Activated naive CD4-positive, alpha-beta T cell treated with anti-CD3 and anti-CD28 coated beads for 36 hours (primary cell): ENCODE measurements at regions of chr17 and their contacts with region 1.

Region 1: GRCh38 chr17:81871387-81872230 is 472 bp upstream of the ARHGDIA start:
- DNase-seq: peak; percentile 96
- H3K4me3 Mint-ChIP-seq: peak overlapping the region; percentile 83
- H3K27ac Mint-ChIP-seq: peak overlapping the region; percentile 94
- H3K4me1 Mint-ChIP-seq: peaks cover 48% of the 10 kb centered on the region
- H3K27me3 Mint-ChIP-seq: no peaks in the 10 kb centered on the region

Region 2: GRCh38 chr17:81711814-81712467 is 159.7 kb before region 1 on chr17 and contains the start of gene SLC25A10:
- CTCF ChIA-PET with region 1: interaction called, 4 read pairs
- intact Hi-C with region 1: loop called (anchors 5 kb)
- DNase-seq: peak; percentile 83
- H3K4me3 Mint-ChIP-seq: peak within 1 kb of the TSS; percentile 79
- H3K27ac Mint-ChIP-seq: peak within 1 kb of the TSS; percentile 71
- H3K4me1 Mint-ChIP-seq: peaks cover 32% of the 10 kb centered on the region
- H3K27me3 Mint-ChIP-seq: no peaks in the 10 kb centered on the region
- total RNA-seq, gene SLC25A10: 16.9 to 18.0 TPM

Region 3: GRCh38 chr17:81842725-81843504 is 28.7 kb before region 1 on chr17:
- CTCF ChIA-PET with region 1: no interaction called
- intact Hi-C with region 1: no loop called
- DNase-seq: no peak
- H3K4me3 Mint-ChIP-seq: no peak overlapping the region
- H3K27ac Mint-ChIP-seq: no peak overlapping the region
- H3K4me1 Mint-ChIP-seq: no peaks in the 10 kb centered on the region
- H3K27me3 Mint-ChIP-seq: no peaks in the 10 kb centered on the region

Region 4: GRCh38 chr17:81890447-81891299 is 19.1 kb after region 1 on chr17:
- CTCF ChIA-PET with region 1: interaction called, 5 read pairs
- intact Hi-C with region 1: loop called (anchors 1 kb)
- DNase-seq: peak; percentile 43
- H3K4me3 Mint-ChIP-seq: peak overlapping the region; percentile 85
- H3K27ac Mint-ChIP-seq: peak overlapping the region; percentile 93
- H3K4me1 Mint-ChIP-seq: peaks cover 33% of the 10 kb centered on the region
- H3K27me3 Mint-ChIP-seq: no peaks in the 10 kb centered on the region

Region 5: DNA sequence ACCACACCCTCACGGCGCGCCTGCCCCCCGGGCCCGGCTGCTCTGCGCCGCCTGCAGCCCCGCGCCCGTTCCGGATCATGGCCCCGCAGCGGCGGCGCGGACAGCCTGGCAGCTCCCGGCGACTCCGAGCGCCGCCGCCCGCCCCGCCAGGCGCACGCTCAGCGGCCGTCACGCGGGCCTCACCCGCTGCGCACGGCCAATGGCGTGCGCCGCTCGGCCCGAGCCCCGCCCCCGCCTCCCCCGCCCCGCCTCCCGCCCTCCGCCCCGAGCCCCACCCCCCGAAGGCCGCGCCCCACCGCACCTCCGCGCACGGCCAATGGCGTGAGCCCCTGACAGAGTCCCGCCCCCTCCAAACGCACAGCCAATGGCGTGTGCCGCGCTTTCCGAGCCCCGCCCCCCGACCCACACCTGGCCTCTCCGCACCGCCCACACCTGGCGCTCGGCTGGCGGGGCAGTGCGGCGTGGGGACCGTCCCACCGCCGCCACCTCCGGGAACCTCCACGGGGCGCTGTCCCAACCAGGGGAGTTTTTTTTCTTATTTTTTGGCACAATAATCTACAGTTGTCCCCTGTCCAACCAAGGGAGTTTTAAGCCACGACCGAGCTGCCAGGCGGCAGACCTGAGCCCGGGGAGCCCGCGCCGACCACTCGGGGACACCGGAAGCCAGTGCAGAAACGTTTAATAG is 39.8 kb after region 1 on chr17 and contains the start of gene PCYT2:
- CTCF ChIA-PET with region 1: no interaction called
- intact Hi-C with region 1: loop called (anchors 2 kb)
- DNase-seq: peak; percentile 95
- H3K4me3 Mint-ChIP-seq: peak within 1 kb of the TSS; percentile 79
- H3K27ac Mint-ChIP-seq: no peak within 1 kb of the TSS
- H3K4me1 Mint-ChIP-seq: peaks cover 22% of the 10 kb centered on the region
- H3K27me3 Mint-ChIP-seq: no peaks in the 10 kb centered on the region
- total RNA-seq, gene PCYT2: 15.9 to 16.6 TPM

Region 6: DNA sequence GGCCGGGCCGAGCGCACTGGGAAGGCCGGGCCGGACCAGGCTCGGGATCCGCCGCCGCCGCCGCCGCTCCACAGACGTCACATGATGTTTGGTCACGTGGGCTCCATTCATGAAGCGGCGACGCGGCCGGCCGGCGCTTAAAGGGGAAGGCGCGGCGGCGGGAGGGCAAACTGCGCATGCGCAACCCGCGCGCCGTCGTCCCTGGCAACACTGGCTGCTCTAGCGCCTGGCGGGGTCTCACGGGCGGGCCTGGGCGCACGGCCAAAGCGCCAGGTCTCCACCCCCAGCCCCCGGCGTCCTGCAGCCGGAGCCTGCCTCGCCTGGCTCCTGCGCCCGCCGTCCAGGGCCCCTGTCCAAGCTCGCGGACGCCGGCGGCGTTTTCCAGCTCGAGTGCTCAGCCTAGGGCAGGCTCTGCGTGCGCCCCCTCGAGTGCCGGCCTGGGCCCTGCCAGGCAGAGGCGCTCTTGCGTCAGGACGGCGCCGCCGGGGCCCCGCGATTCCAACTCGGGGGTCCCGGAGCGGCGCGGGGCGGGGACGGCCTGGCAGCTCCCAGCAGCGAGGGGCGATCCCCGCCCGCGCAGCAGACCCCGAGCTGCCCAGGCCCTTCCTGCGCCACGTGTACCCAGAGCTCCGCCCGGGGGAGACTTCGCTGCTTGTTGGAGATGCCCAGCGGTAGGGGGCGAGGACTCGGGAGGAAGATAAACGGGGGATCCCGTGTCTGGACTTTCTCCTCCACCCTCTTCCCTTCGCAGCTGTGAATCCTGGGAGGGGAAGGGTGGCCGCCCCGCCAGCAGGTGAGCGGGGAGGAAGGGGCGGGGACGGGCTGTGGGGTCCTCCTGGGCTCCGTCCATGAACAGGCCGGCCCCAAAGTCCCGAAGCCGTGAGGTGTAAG is 56.3 kb after region 1 on chr17 and contains the start of gene MAFG:
- CTCF ChIA-PET with region 1: interaction called, 4 read pairs
- intact Hi-C with region 1: loop called (anchors 2 kb)
- DNase-seq: peak; percentile 88
- H3K4me3 Mint-ChIP-seq: peak within 1 kb of the TSS; percentile 76
- H3K27ac Mint-ChIP-seq: peak within 1 kb of the TSS; percentile 86
- H3K4me1 Mint-ChIP-seq: peaks cover 26% of the 10 kb centered on the region
- H3K27me3 Mint-ChIP-seq: peaks cover 5% of the 10 kb centered on the region
- total RNA-seq, gene MAFG: 13.5 to 14.8 TPM

Region 7: GRCh38 chr17:82457997-82458864 is 586.6 kb after region 1 on chr17 and contains the start of gene NARF:
- CTCF ChIA-PET with region 1: no interaction called
- intact Hi-C with region 1: loop called (anchors 2 kb)
- DNase-seq: peak; percentile 97
- H3K4me3 Mint-ChIP-seq: peak within 1 kb of the TSS; percentile 78
- H3K27ac Mint-ChIP-seq: peak within 1 kb of the TSS; percentile 97
- H3K4me1 Mint-ChIP-seq: peaks cover 27% of the 10 kb centered on the region
- H3K27me3 Mint-ChIP-seq: no peaks in the 10 kb centered on the region
- total RNA-seq, gene NARF: 64.2 to 69.3 TPM